ENCODE measurements at regions of chr15 and their contacts with region 1.

Region 1: GRCh38 chr15:79028411-79028964 is 62.1 kb downstream of the RASGRF1 start:
- H3K4me3 Mint-ChIP-seq: no peak overlapping the region
- H3K27ac Mint-ChIP-seq: no peak overlapping the region
- H3K4me1 Mint-ChIP-seq: peaks cover 25% of the 10 kb centered on the region
- H3K27me3 Mint-ChIP-seq: peaks cover 7% of the 10 kb centered on the region

Region 2: GRCh38 chr15:78909791-78910228 is 118.7 kb before region 1 on chr15:
- intact Hi-C with region 1: loop called (anchors 1 kb)
- H3K4me3 Mint-ChIP-seq: no peak overlapping the region
- H3K27ac Mint-ChIP-seq: peak overlapping the region; percentile 16
- H3K4me1 Mint-ChIP-seq: peaks cover 73% of the 10 kb centered on the region
- H3K27me3 Mint-ChIP-seq: no peaks in the 10 kb centered on the region

Region 3: GRCh38 chr15:79101866-79102578 is 73.5 kb after region 1 on chr15:
- intact Hi-C with region 1: loop called (anchors 10 kb)
- H3K4me3 Mint-ChIP-seq: no peak overlapping the region
- H3K27ac Mint-ChIP-seq: no peak overlapping the region
- H3K4me1 Mint-ChIP-seq: peaks cover 17% of the 10 kb centered on the region
- H3K27me3 Mint-ChIP-seq: peaks cover 70% of the 10 kb centered on the region